ENCODE measurements at regions of chr11 and their contacts with region 1.

Region 1: GRCh38 chr11:75204685-75205563 is 35.6 kb upstream of the TPBGL start:
- DNase-seq: peak; percentile 91
- ATAC-seq: peak; percentile 100
- H3K4me3 ChIP-seq: no peak overlapping the region
- H3K27ac ChIP-seq: no peak overlapping the region
- H3K4me1 ChIP-seq: no peaks in the 10 kb centered on the region
- H3K27me3 ChIP-seq: peaks cover 44% of the 10 kb centered on the region
- CTCF ChIP-seq: peak; percentile 98

Region 2: GRCh38 chr11:75022759-75023396 is 182.0 kb before region 1 on chr11:
- CTCF ChIA-PET with region 1: interaction called, 16 read pairs
- POLR2A ChIA-PET with region 1: no interaction called
- intact Hi-C with region 1: loop called (anchors 1 kb)
- DNase-seq: peak; percentile 93
- ATAC-seq: peak; percentile 98
- H3K4me3 ChIP-seq: no peak overlapping the region
- H3K27ac ChIP-seq: no peak overlapping the region
- H3K4me1 ChIP-seq: no peaks in the 10 kb centered on the region
- H3K27me3 ChIP-seq: no peaks in the 10 kb centered on the region
- CTCF ChIP-seq: peak; percentile 99

Measured in PC-3 (cell line).